ENCODE measurements at regions of chr1 and their contacts with region 1.

Region 1: GRCh38 chr1:196148367-196148970 is 459.8 kb downstream of the KCNT2 start:
- DNase-seq: no peak
- ATAC-seq: peak; percentile 56
- H3K4me3 ChIP-seq: no peak overlapping the region
- H3K27ac ChIP-seq: no peak overlapping the region
- H3K4me1 ChIP-seq: no peaks in the 10 kb centered on the region
- H3K27me3 ChIP-seq: no peaks in the 10 kb centered on the region
- CTCF ChIP-seq: peak; percentile 21 to 51 (median 49); a peak in 4 of 6 replicates
- EP300 ChIP-seq: no peak
- POLR2A ChIP-seq: no peak
- RAD21 ChIP-seq: peak; percentile 53

Region 2: DNA sequence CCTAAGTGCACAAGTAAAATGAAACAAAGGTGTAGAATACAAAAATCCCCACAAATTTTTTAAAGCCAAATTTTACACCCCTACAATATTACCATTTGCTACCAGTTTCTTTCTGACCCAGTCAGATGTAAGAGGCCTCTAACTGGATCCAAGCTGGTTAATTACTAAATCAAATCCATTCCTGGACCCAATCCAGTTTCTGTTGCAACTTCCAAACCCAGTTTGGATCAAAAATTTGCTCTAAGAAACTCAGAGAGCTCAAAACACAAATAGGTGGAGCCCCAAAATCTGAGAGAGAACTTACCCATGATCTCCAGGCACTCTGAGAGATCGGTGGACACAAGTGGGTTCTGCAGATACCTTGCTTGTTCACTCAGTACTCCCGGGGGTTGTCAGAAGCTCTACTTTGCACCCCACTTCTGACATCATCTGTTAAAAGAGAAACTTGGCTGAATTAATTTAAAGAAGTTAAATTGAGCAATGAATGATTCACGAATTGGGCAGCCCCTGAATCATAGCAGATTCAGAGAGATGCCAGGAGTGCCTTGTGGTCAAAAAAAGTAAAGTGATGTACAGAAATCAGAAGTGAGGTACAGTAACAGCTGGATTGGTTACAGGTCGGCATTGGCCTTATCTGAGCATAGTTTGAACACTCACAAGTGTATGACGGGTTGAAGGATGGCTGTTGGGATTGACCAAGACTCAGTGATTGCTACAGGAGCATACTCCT is 11.8 kb after region 1 on chr1:
- CTCF ChIA-PET with region 1: interaction called, 11 read pairs
- POLR2A ChIA-PET with region 1: no interaction called
- RAD21 ChIA-PET with region 1: no interaction called
- SMC1A ChIA-PET with region 1: interaction called, 10 read pairs
- in situ Hi-C with region 1: no loop called
- intact Hi-C with region 1: no loop called
- DNase-seq: no peak
- ATAC-seq: peak; percentile 31; the same call in 2 of the 3 replicates
- H3K4me3 ChIP-seq: no peak overlapping the region
- H3K27ac ChIP-seq: no peak overlapping the region
- H3K4me1 ChIP-seq: no peaks in the 10 kb centered on the region
- H3K27me3 ChIP-seq: no peaks in the 10 kb centered on the region
- CTCF ChIP-seq: no peak
- EP300 ChIP-seq: no peak
- POLR2A ChIP-seq: no peak
- RAD21 ChIP-seq: no peak

Region 3: GRCh38 chr1:196309386-196309785 is 160.9 kb after region 1 on chr1:
- CTCF ChIA-PET with region 1: interaction called, 37 read pairs
- POLR2A ChIA-PET with region 1: no interaction called
- RAD21 ChIA-PET with region 1: interaction called, 27 read pairs
- SMC1A ChIA-PET with region 1: interaction called, 19 read pairs
- in situ Hi-C with region 1: loop called (anchors 10 kb)
- intact Hi-C with region 1: loop called (anchors 2 kb)
- DNase-seq: no peak
- ATAC-seq: peak; percentile 62
- H3K4me3 ChIP-seq: no peak overlapping the region
- H3K27ac ChIP-seq: no peak overlapping the region
- H3K4me1 ChIP-seq: no peaks in the 10 kb centered on the region
- H3K27me3 ChIP-seq: no peaks in the 10 kb centered on the region
- CTCF ChIP-seq: no peak; a peak in 1 of 6 replicates
- EP300 ChIP-seq: no peak
- POLR2A ChIP-seq: no peak
- RAD21 ChIP-seq: peak; percentile 28

Region 4: DNA sequence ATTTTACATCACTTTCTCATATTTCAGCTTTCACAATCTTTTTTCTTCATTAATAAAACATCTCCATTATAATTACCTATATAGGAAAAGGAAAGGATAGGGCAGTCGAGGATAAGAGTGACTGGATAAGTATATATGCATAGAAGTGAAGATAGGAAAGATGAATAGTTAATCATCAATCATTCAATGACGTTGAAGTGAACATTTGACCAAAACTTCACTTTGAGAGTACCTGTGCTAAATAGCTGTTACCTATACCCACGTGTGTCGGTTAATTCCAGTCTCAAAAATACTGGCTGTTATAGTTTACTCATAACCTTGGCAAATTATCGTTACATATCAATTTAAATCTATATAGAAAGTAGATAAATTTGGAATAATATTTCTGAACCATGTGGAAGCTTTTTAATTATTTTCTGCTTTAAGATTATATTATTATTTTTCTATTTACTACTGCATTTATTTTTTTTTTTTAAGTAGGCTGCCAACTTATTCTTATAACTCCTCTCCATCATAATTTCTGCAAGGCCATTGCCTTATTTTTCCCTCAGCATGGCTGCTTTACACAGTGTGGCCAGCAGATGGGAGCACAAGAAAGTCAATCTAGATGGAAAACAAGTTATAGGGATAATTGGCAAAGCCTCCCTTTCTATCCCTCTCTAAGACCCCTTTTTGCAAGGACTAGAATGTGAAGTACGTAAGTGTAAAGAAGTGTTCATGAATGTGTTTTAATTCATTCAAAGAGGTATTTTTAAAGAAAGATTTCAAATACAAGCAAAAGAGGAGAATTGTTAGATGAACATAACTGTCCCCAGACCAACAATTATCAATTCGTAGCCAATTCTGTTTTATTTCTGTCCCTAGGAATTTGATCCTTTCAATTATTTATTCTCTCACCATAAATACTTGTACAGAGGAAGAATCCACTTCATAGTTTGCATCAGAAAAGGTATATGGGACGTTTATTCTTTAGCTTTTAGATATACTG is 169.4 kb after region 1 on chr1:
- CTCF ChIA-PET with region 1: interaction called, 4 read pairs
- POLR2A ChIA-PET with region 1: no interaction called
- RAD21 ChIA-PET with region 1: no interaction called
- SMC1A ChIA-PET with region 1: no interaction called
- in situ Hi-C with region 1: loop called (anchors 10 kb)
- intact Hi-C with region 1: no loop called
- DNase-seq: no peak
- ATAC-seq: 0 out of 3 replicates have a peak, but pooled peaks have one; percentile 25
- H3K4me3 ChIP-seq: no peak overlapping the region
- H3K27ac ChIP-seq: no peak overlapping the region
- H3K4me1 ChIP-seq: no peaks in the 10 kb centered on the region
- H3K27me3 ChIP-seq: no peaks in the 10 kb centered on the region
- CTCF ChIP-seq: peak; percentile 26 to 35 (median 32); a peak in 4 of 6 replicates
- EP300 ChIP-seq: no peak
- POLR2A ChIP-seq: no peak
- RAD21 ChIP-seq: peak; percentile 28; the same call in 1 of the 2 replicates

Region 5: DNA sequence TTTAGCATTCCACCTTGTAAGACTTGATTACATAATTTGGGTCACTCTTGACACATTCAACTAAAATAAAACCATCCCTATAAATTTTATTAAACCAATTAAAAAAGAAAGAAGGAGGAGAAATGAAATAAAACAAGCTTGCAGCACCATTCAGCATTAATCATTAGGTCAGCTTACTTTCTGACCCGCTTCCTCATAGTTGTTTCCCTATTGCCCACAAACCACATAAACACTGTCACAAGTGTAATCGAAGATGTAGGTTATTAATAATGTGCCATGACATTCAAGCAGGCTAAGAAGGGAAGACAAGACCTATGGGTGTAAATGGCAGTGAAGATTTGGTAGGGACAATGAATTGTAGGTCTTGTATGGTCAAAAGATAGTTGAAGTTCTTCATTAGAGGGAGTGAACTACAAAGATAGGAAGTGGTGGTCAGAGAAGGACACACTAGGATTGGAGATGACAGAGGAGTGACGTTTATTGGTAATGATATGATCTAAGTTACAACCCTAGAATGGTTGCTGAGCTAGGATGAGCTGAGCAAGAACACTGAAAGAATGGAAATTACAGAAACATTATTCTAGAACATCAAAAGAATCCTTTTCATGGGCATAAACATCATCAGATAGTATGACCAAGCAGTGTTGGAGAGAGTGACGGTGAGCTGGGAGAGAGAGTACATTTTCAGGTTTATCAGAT is 228.3 kb after region 1 on chr1:
- CTCF ChIA-PET with region 1: interaction called, 4 read pairs
- POLR2A ChIA-PET with region 1: no interaction called
- RAD21 ChIA-PET with region 1: interaction called, 3 read pairs
- SMC1A ChIA-PET with region 1: no interaction called
- in situ Hi-C with region 1: no loop called
- intact Hi-C with region 1: loop called (anchors 5 kb)
- DNase-seq: no peak
- ATAC-seq: peak; percentile 21; the same call in 1 of the 3 replicates
- H3K4me3 ChIP-seq: no peak overlapping the region
- H3K27ac ChIP-seq: no peak overlapping the region
- H3K4me1 ChIP-seq: no peaks in the 10 kb centered on the region
- H3K27me3 ChIP-seq: no peaks in the 10 kb centered on the region
- CTCF ChIP-seq: no peak
- EP300 ChIP-seq: no peak
- POLR2A ChIP-seq: no peak
- RAD21 ChIP-seq: no peak

Region 6: DNA sequence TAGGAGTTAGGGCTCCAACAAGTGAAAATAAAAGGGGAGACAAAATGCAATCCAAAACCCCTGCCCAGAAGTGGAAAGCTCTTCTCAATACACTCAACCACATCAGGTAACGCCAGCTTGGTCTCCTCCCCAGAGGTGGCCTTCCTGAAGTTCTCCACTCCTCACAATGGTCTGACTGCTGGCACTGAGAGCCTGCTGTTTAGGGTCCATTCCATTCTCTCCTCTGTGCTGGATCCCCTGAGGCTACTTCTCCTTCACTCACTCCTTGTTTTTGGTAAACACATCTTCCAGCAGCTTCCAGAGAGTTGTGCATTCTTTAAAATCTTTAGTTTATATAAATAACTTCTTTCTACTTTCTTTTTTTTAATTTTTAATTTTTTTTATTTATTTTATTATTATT is 270.3 kb after region 1 on chr1:
- CTCF ChIA-PET with region 1: no interaction called
- POLR2A ChIA-PET with region 1: no interaction called
- RAD21 ChIA-PET with region 1: no interaction called
- SMC1A ChIA-PET with region 1: no interaction called
- in situ Hi-C with region 1: no loop called
- intact Hi-C with region 1: no loop called
- DNase-seq: no peak
- ATAC-seq: no peak
- H3K4me3 ChIP-seq: no peak overlapping the region
- H3K27ac ChIP-seq: no peak overlapping the region
- H3K4me1 ChIP-seq: no peaks in the 10 kb centered on the region
- H3K27me3 ChIP-seq: no peaks in the 10 kb centered on the region
- CTCF ChIP-seq: no peak
- EP300 ChIP-seq: no peak
- POLR2A ChIP-seq: no peak
- RAD21 ChIP-seq: no peak

Region 7: DNA sequence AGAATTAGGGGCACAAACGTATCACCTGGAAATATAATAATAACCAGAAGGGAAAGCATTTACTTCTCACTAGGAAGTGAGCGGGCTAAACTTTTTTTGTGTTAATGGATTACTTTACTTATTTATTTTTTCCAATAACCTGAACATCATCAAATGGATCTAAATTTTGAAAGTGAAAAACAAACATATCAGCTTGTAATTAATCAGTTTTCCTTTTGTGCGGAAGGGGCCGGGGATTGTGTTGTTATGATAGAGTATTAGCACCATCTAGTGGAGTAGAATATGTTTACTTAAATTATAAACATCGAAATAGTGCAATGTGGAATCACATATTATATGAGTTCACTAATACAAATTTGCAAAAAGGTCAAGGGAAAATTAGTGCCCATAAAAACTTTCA is 512.4 kb after region 1 on chr1:
- CTCF ChIA-PET with region 1: interaction called, 28 read pairs
- POLR2A ChIA-PET with region 1: no interaction called
- RAD21 ChIA-PET with region 1: interaction called, 34 read pairs
- SMC1A ChIA-PET with region 1: interaction called, 7 read pairs
- in situ Hi-C with region 1: loop called (anchors 5 kb)
- intact Hi-C with region 1: loop called (anchors 1 kb)
- DNase-seq: no peak
- ATAC-seq: peak; percentile 76
- H3K4me3 ChIP-seq: no peak overlapping the region
- H3K27ac ChIP-seq: no peak overlapping the region
- H3K4me1 ChIP-seq: no peaks in the 10 kb centered on the region
- H3K27me3 ChIP-seq: no peaks in the 10 kb centered on the region; a peak in 1 of 4 replicates
- CTCF ChIP-seq: peak; percentile 19 to 60 (median 34); a peak in 5 of 6 replicates
- EP300 ChIP-seq: no peak
- POLR2A ChIP-seq: no peak
- RAD21 ChIP-seq: peak; percentile 76